Activated CD8-positive, alpha-beta T cell treated with anti-CD3 and anti-CD28 coated beads, Interleukin-2, amount 10 ng/mL, durations not matched to agents 7 days and 5 days (primary cell): ENCODE measurements at regions of chr14 and their contacts with region 1.

Region 1: GRCh38 chr14:24605435-24606190 is 3.9 kb downstream of the GZMH start:
- DNase-seq: peak; percentile 87
- ATAC-seq: peak; percentile 89
- H3K4me3 Mint-ChIP-seq: peak overlapping the region; percentile 72
- H3K27ac Mint-ChIP-seq: peak overlapping the region; percentile 93
- H3K4me1 Mint-ChIP-seq: peaks cover 58% of the 10 kb centered on the region
- H3K27me3 Mint-ChIP-seq: peaks cover 2% of the 10 kb centered on the region

Region 2: DNA sequence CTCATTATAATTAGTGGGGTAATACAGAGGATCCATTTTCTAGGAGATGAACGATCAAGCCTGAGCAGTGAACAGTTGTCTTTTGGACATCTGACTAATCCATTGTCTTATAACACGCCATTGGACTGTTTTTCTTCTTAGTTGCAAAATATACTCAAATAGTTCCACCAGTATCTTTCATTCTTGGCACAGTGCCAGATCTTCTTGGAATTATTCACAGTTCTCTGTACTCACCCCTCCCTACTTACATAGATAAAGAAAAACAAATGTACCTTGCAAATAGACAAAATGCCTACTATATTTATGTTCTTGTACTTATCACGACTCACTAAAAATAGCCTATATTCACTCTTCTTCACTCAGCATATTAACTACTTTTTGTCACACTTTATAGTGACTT is 179.9 kb before region 1 on chr14:
- CTCF ChIA-PET with region 1: no interaction called
- POLR2A ChIA-PET with region 1: no interaction called
- DNase-seq: no peak
- ATAC-seq: no peak
- H3K4me3 Mint-ChIP-seq: no peak overlapping the region
- H3K27ac Mint-ChIP-seq: no peak overlapping the region
- H3K4me1 Mint-ChIP-seq: peaks cover 38% of the 10 kb centered on the region
- H3K27me3 Mint-ChIP-seq: no peaks in the 10 kb centered on the region

Region 3: DNA sequence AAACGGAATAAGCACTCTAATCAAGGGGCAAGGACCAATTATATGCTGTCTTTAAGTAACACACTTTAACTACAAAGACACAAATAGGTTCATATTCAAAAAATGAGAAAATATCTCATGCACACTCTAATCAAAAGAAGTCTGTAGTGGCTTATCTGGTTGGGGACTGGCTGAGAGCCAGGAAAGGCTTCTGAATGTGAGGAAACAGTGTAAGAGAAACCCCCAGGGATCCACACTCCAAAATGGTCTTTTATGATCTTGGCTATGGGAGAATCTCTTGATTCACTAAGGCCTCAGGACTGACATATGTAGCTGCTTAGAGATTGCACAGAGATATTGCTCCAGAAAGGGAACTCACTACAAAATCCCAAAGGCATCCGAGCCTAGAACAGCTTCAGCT is 39.8 kb before region 1 on chr14:
- CTCF ChIA-PET with region 1: no interaction called
- POLR2A ChIA-PET with region 1: no interaction called
- DNase-seq: no peak
- ATAC-seq: no peak
- H3K4me3 Mint-ChIP-seq: no peak overlapping the region
- H3K27ac Mint-ChIP-seq: no peak overlapping the region
- H3K4me1 Mint-ChIP-seq: no peaks in the 10 kb centered on the region
- H3K27me3 Mint-ChIP-seq: peaks cover 20% of the 10 kb centered on the region

Region 4: DNA sequence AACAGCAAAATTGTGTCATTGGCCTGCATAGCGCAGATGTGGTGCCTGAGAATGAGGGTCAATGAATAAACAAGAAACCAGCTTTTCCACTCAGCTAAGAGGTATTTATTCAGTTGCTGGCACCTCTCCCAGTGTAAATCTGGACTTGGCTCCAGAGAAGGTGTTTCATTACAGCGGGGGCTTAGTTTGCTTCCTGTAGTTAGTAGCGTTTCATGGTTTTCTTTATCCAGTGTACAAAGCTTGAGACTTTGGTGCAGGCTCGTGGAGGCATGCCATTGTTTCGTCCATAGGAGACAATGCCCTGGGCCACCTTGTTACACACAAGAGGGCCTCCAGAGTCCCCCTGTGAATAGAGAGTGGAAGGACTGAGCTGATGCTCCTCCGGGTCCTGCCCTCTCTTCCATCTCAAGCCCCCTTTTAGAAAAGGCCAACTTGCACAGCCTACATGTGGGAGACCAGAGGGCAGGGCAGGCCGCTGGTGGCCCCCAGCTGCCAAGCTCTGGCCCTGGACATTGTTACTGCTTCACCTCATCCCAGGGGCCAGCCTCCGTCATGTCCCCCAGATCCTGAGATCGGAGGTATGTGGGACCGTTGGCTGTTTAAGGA is 25.4 kb after region 1 on chr14:
- CTCF ChIA-PET with region 1: interaction called, 82 read pairs
- POLR2A ChIA-PET with region 1: interaction called, 20 read pairs
- DNase-seq: no peak
- ATAC-seq: no peak
- H3K4me3 Mint-ChIP-seq: peak overlapping the region; percentile 93
- H3K27ac Mint-ChIP-seq: peak overlapping the region; percentile 98
- H3K4me1 Mint-ChIP-seq: peaks cover 74% of the 10 kb centered on the region
- H3K27me3 Mint-ChIP-seq: no peaks in the 10 kb centered on the region

Region 5: DNA sequence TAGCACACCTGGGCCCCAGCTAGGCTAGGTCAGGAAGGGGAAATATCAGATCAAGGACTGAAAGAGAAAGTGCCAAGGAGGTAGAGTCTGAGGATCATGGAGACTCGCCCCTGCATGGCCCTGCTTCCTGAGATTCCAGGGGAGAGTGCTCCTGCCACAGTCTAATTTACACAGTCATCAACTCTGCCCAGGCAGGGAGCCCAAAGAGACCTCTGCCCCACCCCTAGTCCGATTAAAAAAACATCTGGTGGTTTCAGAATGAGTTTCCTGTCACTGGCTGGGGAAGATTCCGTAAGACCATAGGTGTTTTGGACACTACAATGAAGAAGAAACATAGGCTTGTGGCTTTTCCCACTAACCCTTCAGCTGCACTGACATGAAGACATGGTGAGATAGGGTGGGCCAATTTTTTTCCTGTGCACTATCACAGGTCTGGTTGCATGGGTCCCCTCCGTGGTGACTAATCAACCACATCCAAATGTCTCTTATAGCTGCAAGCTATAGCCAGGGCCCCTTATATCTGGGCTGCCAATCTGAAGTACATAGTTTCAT is 59.9 kb after region 1 on chr14:
- CTCF ChIA-PET with region 1: interaction called, 45 read pairs
- POLR2A ChIA-PET with region 1: no interaction called
- DNase-seq: peak; percentile 84
- ATAC-seq: peak; percentile 84
- H3K4me3 Mint-ChIP-seq: peak overlapping the region; percentile 54
- H3K27ac Mint-ChIP-seq: peak overlapping the region; percentile 94
- H3K4me1 Mint-ChIP-seq: peaks cover 94% of the 10 kb centered on the region
- H3K27me3 Mint-ChIP-seq: no peaks in the 10 kb centered on the region

Region 6: DNA sequence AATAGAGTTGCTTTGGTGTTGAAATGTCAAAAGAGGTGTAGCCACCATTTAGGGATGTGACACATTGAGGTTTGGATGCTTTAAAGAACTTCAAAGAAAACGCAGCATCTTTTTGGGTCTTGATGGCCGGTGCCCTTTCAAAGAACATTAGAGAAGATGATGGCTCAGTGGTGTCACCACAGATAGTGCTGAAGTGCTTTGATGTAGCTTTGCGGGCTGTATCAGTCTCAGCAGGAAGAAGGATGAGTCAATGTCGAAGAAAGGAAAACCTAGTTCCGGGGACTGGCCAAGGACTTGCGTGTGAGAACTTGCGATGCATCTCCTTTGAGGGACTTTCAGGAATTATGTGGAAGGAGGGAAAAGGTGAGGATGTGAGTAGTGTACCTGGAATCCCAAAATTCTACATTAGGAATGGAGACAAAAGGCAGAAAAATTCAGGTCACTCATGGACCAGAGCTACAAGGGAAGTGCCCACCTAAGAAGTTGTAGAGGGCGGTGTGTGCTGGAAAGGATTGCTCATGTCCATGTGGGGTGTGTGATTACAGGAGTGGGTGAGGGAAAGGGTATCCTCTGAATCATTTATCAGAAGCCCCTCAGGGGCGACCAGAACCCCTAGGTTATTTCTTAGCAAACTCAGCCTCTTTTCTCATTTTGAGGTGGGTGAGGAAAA is 68.1 kb after region 1 on chr14:
- CTCF ChIA-PET with region 1: interaction called, 90 read pairs
- POLR2A ChIA-PET with region 1: interaction called, 6 read pairs
- DNase-seq: peak; percentile 91
- ATAC-seq: peak; percentile 84
- H3K4me3 Mint-ChIP-seq: peak overlapping the region; percentile 75
- H3K27ac Mint-ChIP-seq: peak overlapping the region; percentile 99
- H3K4me1 Mint-ChIP-seq: peaks cover 90% of the 10 kb centered on the region
- H3K27me3 Mint-ChIP-seq: no peaks in the 10 kb centered on the region

Region 7: GRCh38 chr14:24678801-24679247 is 73.2 kb after region 1 on chr14:
- CTCF ChIA-PET with region 1: interaction called, 90 read pairs
- POLR2A ChIA-PET with region 1: interaction called, 6 read pairs
- DNase-seq: peak; percentile 92
- ATAC-seq: peak; percentile 73
- H3K4me3 Mint-ChIP-seq: peak overlapping the region; percentile 77
- H3K27ac Mint-ChIP-seq: peak overlapping the region; percentile 93
- H3K4me1 Mint-ChIP-seq: peaks cover 71% of the 10 kb centered on the region
- H3K27me3 Mint-ChIP-seq: no peaks in the 10 kb centered on the region

Region 8: DNA sequence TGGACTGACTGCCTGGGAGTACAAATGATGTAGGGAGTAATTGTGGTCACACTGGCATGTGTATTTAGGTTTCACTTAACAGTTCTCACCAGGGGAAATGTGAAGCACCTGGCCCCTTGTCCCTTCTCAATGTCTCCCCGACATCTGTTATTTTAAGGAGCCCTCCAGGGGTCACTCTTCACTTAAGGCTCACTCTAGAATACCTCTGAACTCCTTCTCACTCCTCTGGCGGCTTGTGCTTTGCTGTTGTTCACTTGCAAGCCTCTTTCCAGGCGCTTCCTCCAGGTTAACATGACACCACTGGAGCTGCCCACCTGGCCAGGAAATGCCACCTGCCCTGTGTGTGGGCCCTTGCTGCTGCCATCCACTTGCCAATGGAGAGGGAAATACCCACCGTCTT is 84.9 kb after region 1 on chr14:
- CTCF ChIA-PET with region 1: interaction called, 18 read pairs
- POLR2A ChIA-PET with region 1: interaction called, 5 read pairs
- DNase-seq: peak; percentile 59
- ATAC-seq: no peak
- H3K4me3 Mint-ChIP-seq: no peak overlapping the region
- H3K27ac Mint-ChIP-seq: peak overlapping the region; percentile 54
- H3K4me1 Mint-ChIP-seq: peaks cover 46% of the 10 kb centered on the region
- H3K27me3 Mint-ChIP-seq: no peaks in the 10 kb centered on the region

Region 9: DNA sequence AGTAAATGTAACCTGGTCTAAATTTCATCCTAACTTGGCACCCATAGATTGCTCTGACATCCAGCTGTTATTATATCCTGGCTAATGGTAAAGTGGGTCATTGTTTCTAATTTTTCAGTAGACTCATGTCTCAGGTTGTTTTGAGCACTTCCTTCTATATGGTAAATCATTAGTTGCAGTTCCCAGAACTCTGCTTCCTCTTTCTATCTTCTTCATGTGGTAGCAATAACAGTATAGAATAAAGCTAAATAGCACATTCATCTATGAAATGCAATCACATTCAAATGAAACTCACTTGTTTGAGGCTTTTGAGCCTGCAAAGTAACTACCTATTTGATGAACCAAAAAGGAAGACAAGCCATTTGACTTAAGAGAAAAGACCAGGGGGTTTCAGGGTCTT is 93.4 kb after region 1 on chr14:
- CTCF ChIA-PET with region 1: interaction called, 18 read pairs
- POLR2A ChIA-PET with region 1: interaction called, 5 read pairs
- DNase-seq: no peak
- ATAC-seq: no peak
- H3K4me3 Mint-ChIP-seq: no peak overlapping the region
- H3K27ac Mint-ChIP-seq: peak overlapping the region; percentile 73
- H3K4me1 Mint-ChIP-seq: peaks cover 32% of the 10 kb centered on the region
- H3K27me3 Mint-ChIP-seq: no peaks in the 10 kb centered on the region